ENCODE measurements at regions of chr6 and their contacts with region 1.

Region 1: GRCh38 chr6:31197559-31198305 is 27.2 kb upstream of the POU5F1 start:
- DNase-seq: peak; percentile 95
- H3K4me3 Mint-ChIP-seq: peak overlapping the region; percentile 88
- H3K27ac Mint-ChIP-seq: peak overlapping the region; percentile 33
- H3K4me1 Mint-ChIP-seq: peaks cover 61% of the 10 kb centered on the region
- H3K27me3 Mint-ChIP-seq: no peaks in the 10 kb centered on the region
- CTCF ChIP-seq: no peak

Region 2: GRCh38 chr6:31128093-31128676 is 69.5 kb before region 1 on chr6:
- CTCF ChIA-PET with region 1: interaction called, 10 read pairs
- intact Hi-C with region 1: no loop called
- DNase-seq: peak; percentile 92
- H3K4me3 Mint-ChIP-seq: no peak overlapping the region
- H3K27ac Mint-ChIP-seq: peak overlapping the region; percentile 45
- H3K4me1 Mint-ChIP-seq: peaks cover 50% of the 10 kb centered on the region
- H3K27me3 Mint-ChIP-seq: no peaks in the 10 kb centered on the region
- CTCF ChIP-seq: peak; percentile 99

Region 3: GRCh38 chr6:31139599-31139998 is 58.1 kb before region 1 on chr6:
- CTCF ChIA-PET with region 1: interaction called, 43 read pairs
- intact Hi-C with region 1: loop called (anchors 1 kb)
- DNase-seq: no peak
- H3K4me3 Mint-ChIP-seq: no peak overlapping the region
- H3K27ac Mint-ChIP-seq: no peak overlapping the region
- H3K4me1 Mint-ChIP-seq: peaks cover 29% of the 10 kb centered on the region
- H3K27me3 Mint-ChIP-seq: no peaks in the 10 kb centered on the region
- CTCF ChIP-seq: no peak

Region 4: GRCh38 chr6:31285486-31285885 is 87.8 kb after region 1 on chr6:
- CTCF ChIA-PET with region 1: no interaction called
- intact Hi-C with region 1: no loop called
- DNase-seq: no peak
- H3K4me3 Mint-ChIP-seq: no peak overlapping the region
- H3K27ac Mint-ChIP-seq: no peak overlapping the region
- H3K4me1 Mint-ChIP-seq: no peaks in the 10 kb centered on the region
- H3K27me3 Mint-ChIP-seq: peaks cover 100% of the 10 kb centered on the region
- CTCF ChIP-seq: no peak